B cell (primary cell): ENCODE measurements at regions of chr15 and their contacts with region 1.

Region 1: GRCh38 chr15:40782580-40783227 is 12.9 kb downstream of the C15orf62 start:
- DNase-seq: peak; percentile 84
- ATAC-seq: peak; percentile 98
- H3K4me3 ChIP-seq: no peak overlapping the region
- H3K4me3 Mint-ChIP-seq: no peak overlapping the region
- H3K27ac ChIP-seq: no peak overlapping the region
- H3K27ac Mint-ChIP-seq: peak overlapping the region; percentile 43
- H3K4me1 ChIP-seq: peaks cover 7% of the 10 kb centered on the region in 2 donors
- H3K4me1 Mint-ChIP-seq: peaks cover 16% of the 10 kb centered on the region
- H3K27me3 ChIP-seq: no peaks in the 10 kb centered on the region
- H3K27me3 Mint-ChIP-seq: no peaks in the 10 kb centered on the region
- CTCF ChIP-seq: peak; percentile 90

Region 2: DNA sequence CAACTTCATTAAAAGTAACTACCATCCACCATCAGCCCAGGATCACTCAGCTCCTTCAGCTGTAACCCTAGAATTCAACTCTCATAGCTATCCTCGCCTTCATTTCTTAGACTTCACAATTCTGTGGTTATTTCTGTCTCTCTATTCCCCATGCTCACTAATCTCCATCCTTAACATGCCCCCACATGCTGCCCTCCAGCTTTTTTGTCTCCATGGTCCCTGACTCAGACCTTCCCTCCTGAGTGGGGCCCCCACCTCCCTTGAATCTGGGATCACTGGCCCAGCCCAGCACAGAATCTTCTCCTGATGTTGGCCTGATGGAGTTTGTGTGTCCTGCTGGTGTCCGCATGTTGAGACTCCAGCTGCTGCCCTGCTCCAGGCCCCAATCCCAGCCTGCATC is 270.3 kb before region 1 on chr15:
- CTCF ChIA-PET with region 1: interaction called, 68 read pairs
- POLR2A ChIA-PET with region 1: no interaction called
- intact Hi-C with region 1: no loop called
- DNase-seq: no peak
- ATAC-seq: no peak
- H3K4me3 ChIP-seq: no peak overlapping the region
- H3K4me3 Mint-ChIP-seq: peak overlapping the region; percentile 98
- H3K27ac ChIP-seq: no peak overlapping the region
- H3K27ac Mint-ChIP-seq: peak overlapping the region; percentile 68
- H3K4me1 ChIP-seq: peaks cover 12 to 18% of the 10 kb centered on the region in 2 donors
- H3K4me1 Mint-ChIP-seq: peaks cover 25% of the 10 kb centered on the region
- H3K27me3 ChIP-seq: peaks cover 0 to 7% (median 2%) of the 10 kb centered on the region in 4 experiments
- H3K27me3 Mint-ChIP-seq: peaks cover 8% of the 10 kb centered on the region
- CTCF ChIP-seq: no peak

Region 3: DNA sequence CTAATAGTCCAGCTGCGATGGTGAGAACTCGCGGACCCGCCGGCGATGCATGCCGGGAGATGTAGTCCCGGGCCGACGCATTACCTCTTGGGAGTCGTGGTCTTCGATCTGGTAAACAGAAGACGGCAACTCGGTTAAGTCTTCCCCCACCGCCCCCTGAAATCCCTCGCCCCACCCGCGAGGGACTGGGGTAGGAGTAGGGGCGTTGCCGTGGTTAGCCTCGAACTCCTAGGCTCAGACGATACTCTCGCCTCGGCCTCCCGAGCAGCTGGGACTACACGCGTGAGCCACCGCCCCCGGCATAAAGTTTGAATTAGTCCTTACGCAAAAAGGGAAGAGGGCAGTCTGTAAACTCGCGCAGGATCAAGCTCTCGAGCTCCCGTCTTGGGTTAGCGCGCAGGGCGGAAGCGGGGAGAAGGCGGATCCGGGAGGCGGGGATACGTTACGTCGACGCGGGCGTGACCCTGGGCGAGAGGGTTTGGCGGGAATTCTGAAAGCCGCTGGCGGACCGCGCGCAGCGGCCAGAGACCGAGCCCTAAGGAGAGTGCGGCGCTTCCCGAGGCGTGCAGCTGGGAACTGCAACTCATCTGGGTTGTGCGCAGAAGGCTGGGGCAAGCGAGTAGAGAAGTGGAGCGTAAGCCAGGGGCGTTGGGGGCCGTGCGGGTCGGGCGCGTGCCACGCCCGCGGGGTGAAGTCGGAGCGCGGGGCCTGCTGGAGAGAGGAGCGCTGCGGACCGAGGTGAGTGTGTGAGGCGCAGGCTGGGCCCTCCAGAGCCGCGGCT is 87.8 kb before region 1 on chr15 and contains the start of gene RAD51:
- CTCF ChIA-PET with region 1: interaction called, 33 read pairs
- POLR2A ChIA-PET with region 1: interaction called, 3 read pairs
- intact Hi-C with region 1: no loop called
- DNase-seq: peak; percentile 96
- ATAC-seq: peak; percentile 88
- H3K4me3 ChIP-seq: peak within 1 kb of the TSS; percentile 84 to 100 (median 87)
- H3K4me3 Mint-ChIP-seq: peak within 1 kb of the TSS; percentile 100
- H3K27ac ChIP-seq: peak within 1 kb of the TSS; percentile 93 to 94
- H3K27ac Mint-ChIP-seq: peak within 1 kb of the TSS; percentile 99
- H3K4me1 ChIP-seq: peaks cover 7 to 18% of the 10 kb centered on the region in 2 donors
- H3K4me1 Mint-ChIP-seq: peaks cover 25% of the 10 kb centered on the region
- H3K27me3 ChIP-seq: no peaks in the 10 kb centered on the region
- H3K27me3 Mint-ChIP-seq: no peaks in the 10 kb centered on the region
- CTCF ChIP-seq: no peak
- total RNA-seq, gene RAD51: 1.9 and 2.0 TPM in 2 replicates

Region 4: DNA sequence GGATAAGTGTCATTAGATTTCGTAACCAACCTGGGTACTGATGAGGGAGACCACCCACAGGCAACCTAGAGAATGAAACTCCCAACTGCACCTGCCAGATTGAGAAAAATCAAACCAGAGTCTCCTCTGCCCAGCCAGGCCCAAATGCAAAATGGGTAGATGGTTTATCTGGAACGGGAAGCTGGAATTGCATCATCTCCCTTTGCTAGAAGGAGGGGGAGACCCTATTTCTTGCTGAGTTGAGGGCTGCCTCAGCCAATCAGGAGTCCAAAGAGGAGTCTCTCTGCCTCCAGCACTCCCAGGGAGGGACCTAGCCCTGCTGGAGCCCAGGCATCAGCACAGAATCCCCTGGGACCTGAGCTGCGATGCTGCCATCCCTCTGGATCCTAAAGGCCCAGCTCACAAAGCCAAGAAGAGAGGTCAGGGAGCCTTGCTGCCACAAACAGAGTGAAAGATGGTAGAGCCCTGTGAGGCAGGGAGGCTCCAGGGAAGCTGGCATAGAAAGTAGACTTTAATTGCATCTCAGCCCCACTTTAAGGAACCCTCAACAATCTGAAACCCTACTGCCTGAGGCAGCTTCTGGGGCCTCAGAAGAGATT is 35.7 kb before region 1 on chr15:
- CTCF ChIA-PET with region 1: interaction called, 177 read pairs
- POLR2A ChIA-PET with region 1: interaction called, 4 read pairs
- intact Hi-C with region 1: loop called (anchors 1 kb)
- DNase-seq: no peak
- ATAC-seq: no peak
- H3K4me3 ChIP-seq: no peak overlapping the region
- H3K4me3 Mint-ChIP-seq: no peak overlapping the region
- H3K27ac ChIP-seq: no peak overlapping the region
- H3K27ac Mint-ChIP-seq: no peak overlapping the region
- H3K4me1 ChIP-seq: no peaks in the 10 kb centered on the region
- H3K4me1 Mint-ChIP-seq: no peaks in the 10 kb centered on the region
- H3K27me3 ChIP-seq: no peaks in the 10 kb centered on the region
- H3K27me3 Mint-ChIP-seq: no peaks in the 10 kb centered on the region
- CTCF ChIP-seq: no peak

Region 5: DNA sequence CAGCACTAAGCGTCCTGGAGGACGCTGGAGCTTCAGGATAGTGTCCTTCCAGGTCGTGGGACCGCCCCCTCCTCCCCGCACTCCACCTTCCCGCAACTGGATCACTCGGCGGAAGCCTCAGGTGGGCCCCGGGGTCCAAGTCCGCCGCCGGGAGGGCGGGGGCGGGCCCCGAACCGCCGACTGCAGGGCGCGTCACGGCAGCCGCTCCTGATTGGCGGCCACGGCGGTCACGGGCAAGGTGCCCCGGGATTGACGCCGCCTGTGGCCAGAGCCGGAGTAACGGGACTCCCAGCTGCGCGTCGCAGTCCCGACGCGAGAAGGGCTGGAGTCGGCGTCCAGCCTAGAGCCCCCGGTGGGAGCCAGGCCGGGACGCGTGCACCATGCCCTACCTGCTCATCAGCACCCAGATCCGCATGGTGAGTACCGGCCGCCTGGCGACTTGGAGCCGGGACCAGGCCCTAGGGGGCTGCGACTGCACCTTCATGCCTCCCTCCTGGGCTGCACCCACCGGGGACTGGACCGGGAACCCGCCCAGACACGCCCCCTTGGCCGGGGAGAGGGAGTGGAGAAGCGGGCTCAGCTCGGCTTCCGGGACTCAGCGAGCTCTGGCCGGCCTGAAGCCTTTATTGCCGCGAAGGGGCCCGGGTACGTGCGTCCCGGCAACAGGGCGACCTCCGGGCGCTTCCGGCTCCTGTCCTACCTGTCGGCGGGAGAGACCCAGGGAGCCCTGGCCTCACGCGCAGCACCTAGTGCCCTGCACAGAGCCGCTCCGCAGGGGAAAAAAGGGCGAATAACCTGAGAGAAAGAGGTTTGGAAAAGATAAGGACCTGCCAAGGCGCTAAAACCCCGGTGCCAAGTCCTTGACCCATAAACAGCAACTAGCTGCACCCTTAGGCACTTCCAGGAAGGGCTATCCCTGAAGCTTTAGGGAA is 18.6 kb before region 1 on chr15 and contains the start of gene GCHFR:
- CTCF ChIA-PET with region 1: interaction called, 99 read pairs
- POLR2A ChIA-PET with region 1: interaction called, 3 read pairs
- intact Hi-C with region 1: loop called (anchors 1 kb)
- DNase-seq: peak; percentile 76
- ATAC-seq: peak; percentile 74
- H3K4me3 ChIP-seq: peak within 1 kb of the TSS; percentile 51 to 87 (median 78)
- H3K4me3 Mint-ChIP-seq: peak within 1 kb of the TSS; percentile 89
- H3K27ac ChIP-seq: peak within 1 kb of the TSS; percentile 24 to 35
- H3K27ac Mint-ChIP-seq: peak within 1 kb of the TSS; percentile 68
- H3K4me1 ChIP-seq: peaks cover 29 to 43% of the 10 kb centered on the region in 2 donors
- H3K4me1 Mint-ChIP-seq: peaks cover 33% of the 10 kb centered on the region
- H3K27me3 ChIP-seq: no peaks in the 10 kb centered on the region
- H3K27me3 Mint-ChIP-seq: no peaks in the 10 kb centered on the region
- CTCF ChIP-seq: peak; percentile 41
- total RNA-seq, gene GCHFR: 23.1 and 23.7 TPM in 2 replicates

Region 6: GRCh38 chr15:41263891-41264351 is 481.2 kb after region 1 on chr15:
- CTCF ChIA-PET with region 1: no interaction called
- POLR2A ChIA-PET with region 1: no interaction called
- intact Hi-C with region 1: no loop called
- DNase-seq: no peak
- ATAC-seq: no peak
- H3K4me3 ChIP-seq: no peak overlapping the region
- H3K4me3 Mint-ChIP-seq: no peak overlapping the region
- H3K27ac ChIP-seq: no peak overlapping the region
- H3K27ac Mint-ChIP-seq: no peak overlapping the region
- H3K4me1 ChIP-seq: peaks cover 14 to 16% of the 10 kb centered on the region in 2 donors
- H3K4me1 Mint-ChIP-seq: peaks cover 11% of the 10 kb centered on the region
- H3K27me3 ChIP-seq: no peaks in the 10 kb centered on the region
- H3K27me3 Mint-ChIP-seq: no peaks in the 10 kb centered on the region
- CTCF ChIP-seq: no peak